Posterior vena cava (tissue), 2 donors: ENCODE measurements at regions of chr2 and their contacts with region 1.

Region 1: GRCh38 chr2:57417007-57417406 is 629.6 kb upstream of the VRK2 start:
- DNase-seq: no peak

Region 2: GRCh38 chr2:55490554-55490953 is 1926.5 kb before region 1 on chr2:
- intact Hi-C with region 1: loop called in 1 of 2 experiments (anchors 10 kb)
- DNase-seq: no peak

Region 3: GRCh38 chr2:57330447-57330846 is 86.6 kb before region 1 on chr2:
- intact Hi-C with region 1: no loop called
- DNase-seq: no peak

Region 4: DNA sequence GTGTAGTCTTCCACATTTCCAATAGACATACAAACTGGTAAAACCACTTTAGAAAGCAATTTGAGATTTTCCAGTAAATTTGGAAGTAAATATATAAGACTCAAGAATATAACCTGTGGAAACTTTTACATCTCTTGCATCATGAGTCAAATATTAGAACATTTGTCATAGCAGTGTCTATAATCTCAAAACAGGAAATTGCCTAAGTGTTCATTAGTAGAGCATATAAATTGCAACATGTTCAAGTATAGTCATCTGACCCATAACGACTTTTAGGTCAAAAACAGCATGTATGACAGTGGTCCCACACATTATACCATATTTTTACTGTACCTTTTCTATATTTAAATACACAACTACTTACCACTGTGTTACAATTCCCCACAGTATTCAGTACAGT is 73.7 kb after region 1 on chr2:
- intact Hi-C with region 1: no loop called
- DNase-seq: no peak